ENCODE measurements at regions of chr1 and their contacts with region 1.

Region 1: GRCh38 chr1:23484253-23485001 is 448 bp upstream of the ASAP3 start:
- DNase-seq: peak; percentile 74
- H3K4me3 ChIP-seq: peak overlapping the region; percentile 81
- H3K27ac ChIP-seq: peak overlapping the region; percentile 70
- H3K27me3 ChIP-seq: no peaks in the 10 kb centered on the region
- CTCF ChIP-seq: no peak

Region 2: DNA sequence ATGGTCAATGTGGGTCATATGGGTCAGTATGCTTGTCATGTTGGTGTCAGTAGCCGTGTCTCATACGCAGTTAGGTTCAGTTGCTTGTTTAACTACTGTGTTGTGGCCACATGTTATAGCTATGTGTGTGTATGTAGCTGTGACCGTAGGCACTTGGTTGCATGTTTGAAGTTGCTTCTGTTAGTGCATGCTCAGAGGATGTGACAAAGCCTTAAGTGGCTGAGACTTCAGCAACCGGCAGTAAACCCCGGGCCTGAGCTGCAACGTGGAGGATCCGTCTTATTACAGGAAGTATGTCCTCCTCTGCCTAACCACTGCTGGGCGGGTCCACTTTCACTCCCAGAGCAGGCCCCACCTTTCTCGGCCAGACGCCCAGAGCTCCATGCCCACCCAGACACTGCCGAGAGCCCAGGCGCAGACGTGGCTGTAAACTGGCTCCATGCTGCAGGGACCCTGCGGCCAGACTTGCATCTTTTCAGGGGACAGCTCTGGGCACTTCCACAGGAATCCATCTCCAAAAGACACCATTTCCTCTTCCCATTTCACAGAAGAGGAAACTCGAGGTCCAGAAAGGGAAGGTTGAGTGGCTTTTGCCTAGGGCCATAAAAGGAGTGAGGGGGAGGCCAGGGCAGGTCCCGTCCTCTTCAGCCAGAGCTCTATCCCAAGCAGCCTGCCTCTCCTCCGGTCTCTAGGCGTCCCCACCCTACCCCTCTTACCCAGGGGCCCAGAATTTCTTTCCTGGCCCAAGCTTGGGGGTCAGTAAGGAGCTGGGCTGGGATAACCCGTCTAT is 62.0 kb before region 1 on chr1:
- CTCF ChIA-PET with region 1: no interaction called
- POLR2A ChIA-PET with region 1: interaction called, 10 read pairs
- DNase-seq: peak; percentile 43
- H3K4me3 ChIP-seq: peak overlapping the region; percentile 34
- H3K27ac ChIP-seq: peak overlapping the region; percentile 88
- H3K27me3 ChIP-seq: no peaks in the 10 kb centered on the region
- CTCF ChIP-seq: no peak